ENCODE measurements at regions of chr5 and their contacts with region 1.

Region 1: DNA sequence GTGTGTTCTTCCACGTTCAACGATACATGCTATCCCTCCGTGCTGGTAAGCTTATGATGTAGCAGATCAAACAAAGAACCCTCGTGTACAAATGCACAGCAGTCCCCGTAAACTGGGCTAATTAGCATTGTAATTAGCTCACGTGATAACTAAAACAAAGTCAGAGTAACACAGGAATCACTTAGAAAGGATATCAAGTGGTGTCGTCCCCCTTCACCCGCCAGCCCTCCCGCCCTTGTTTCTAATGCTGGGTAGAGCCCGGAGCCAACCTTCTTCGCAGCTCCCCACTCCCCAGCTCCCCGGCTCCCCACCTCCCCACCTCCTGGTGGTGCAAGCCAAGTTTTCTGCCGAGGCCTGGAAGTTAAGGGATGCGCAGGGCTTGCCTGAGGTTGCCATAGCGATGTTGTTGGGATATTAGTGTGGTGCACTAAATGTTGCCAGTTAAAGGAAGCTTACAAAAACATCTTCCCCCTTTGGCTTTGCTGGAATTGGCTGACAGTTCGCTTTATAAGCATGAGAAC is 357.9 kb upstream of the CCNH start:
- DNase-seq: no peak
- ATAC-seq: no peak
- H3K4me3 ChIP-seq: no peak overlapping the region
- H3K27ac ChIP-seq: no peak overlapping the region
- H3K4me1 ChIP-seq: no peaks in the 10 kb centered on the region
- H3K27me3 ChIP-seq: peaks cover 1% of the 10 kb centered on the region; the same call in 1 of the 2 replicates
- CTCF ChIP-seq: no peak
- POLR2A ChIP-seq: no peak
- RAD21 ChIP-seq: no peak

Region 2: GRCh38 chr5:87421307-87421706 is 349.4 kb before region 1 on chr5:
- CTCF ChIA-PET with region 1: no interaction called
- POLR2A ChIA-PET with region 1: no interaction called
- dilution Hi-C with region 1: no loop called
- in situ Hi-C with region 1: no loop called
- intact Hi-C with region 1: loop called (anchors 10 kb)
- DNase-seq: no peak
- ATAC-seq: no peak
- H3K4me3 ChIP-seq: no peak overlapping the region
- H3K27ac ChIP-seq: no peak overlapping the region
- H3K4me1 ChIP-seq: no peaks in the 10 kb centered on the region
- H3K27me3 ChIP-seq: no peaks in the 10 kb centered on the region
- CTCF ChIP-seq: no peak
- POLR2A ChIP-seq: no peak
- RAD21 ChIP-seq: no peak

Region 3: GRCh38 chr5:87605663-87606062 is 165.0 kb before region 1 on chr5:
- CTCF ChIA-PET with region 1: no interaction called
- POLR2A ChIA-PET with region 1: no interaction called
- dilution Hi-C with region 1: no loop called
- in situ Hi-C with region 1: no loop called
- intact Hi-C with region 1: no loop called
- DNase-seq: no peak
- ATAC-seq: no peak
- H3K4me3 ChIP-seq: no peak overlapping the region
- H3K27ac ChIP-seq: no peak overlapping the region
- H3K4me1 ChIP-seq: no peaks in the 10 kb centered on the region
- H3K27me3 ChIP-seq: no peaks in the 10 kb centered on the region
- CTCF ChIP-seq: no peak
- POLR2A ChIP-seq: no peak
- RAD21 ChIP-seq: no peak

Region 4: DNA sequence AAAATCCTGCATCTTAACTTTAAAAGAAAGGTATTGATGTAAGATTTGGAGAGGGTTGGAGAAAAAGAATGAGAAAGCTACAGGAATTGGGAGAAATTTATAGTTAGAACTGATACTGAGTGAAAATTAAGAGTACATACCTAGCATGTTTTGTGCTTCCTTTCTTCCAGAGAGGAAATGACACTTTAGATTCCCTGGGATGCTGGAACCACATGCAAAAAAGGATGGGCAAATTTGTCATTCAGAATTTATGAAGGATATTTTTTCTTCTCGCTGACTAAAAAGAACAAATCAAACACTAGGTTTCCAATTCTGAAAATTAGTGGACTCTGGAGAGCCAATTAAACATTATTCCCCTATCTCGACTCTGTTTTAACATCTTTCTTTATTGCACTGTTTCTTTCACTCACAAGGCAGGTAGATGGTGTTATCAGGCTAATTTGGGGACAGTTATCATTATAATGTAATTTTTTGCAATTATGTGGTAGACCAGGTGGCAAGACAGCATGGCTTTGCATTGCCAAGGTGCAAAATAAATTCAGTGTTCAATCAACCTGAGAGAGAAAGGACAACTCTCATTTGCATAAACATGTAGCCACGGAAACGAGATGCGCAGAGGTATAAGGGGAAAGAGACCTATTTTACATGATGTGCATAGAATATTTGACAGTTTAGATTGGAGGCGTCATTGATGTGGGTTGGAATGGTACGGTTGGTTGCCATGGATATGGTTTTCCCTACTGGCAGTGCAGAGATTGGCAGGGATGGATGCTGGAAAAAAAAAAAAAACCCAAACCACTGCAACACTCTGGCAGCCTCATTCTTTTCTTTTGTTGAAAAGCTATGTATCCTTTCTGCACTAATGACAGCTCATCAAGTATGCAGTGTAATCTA is 37.5 kb before region 1 on chr5:
- CTCF ChIA-PET with region 1: no interaction called
- POLR2A ChIA-PET with region 1: no interaction called
- dilution Hi-C with region 1: no loop called
- in situ Hi-C with region 1: no loop called
- intact Hi-C with region 1: no loop called
- DNase-seq: no peak
- ATAC-seq: no peak
- H3K4me3 ChIP-seq: no peak overlapping the region
- H3K27ac ChIP-seq: no peak overlapping the region
- H3K4me1 ChIP-seq: no peaks in the 10 kb centered on the region
- H3K27me3 ChIP-seq: no peaks in the 10 kb centered on the region
- CTCF ChIP-seq: no peak
- POLR2A ChIP-seq: no peak
- RAD21 ChIP-seq: no peak

Region 5: GRCh38 chr5:87807783-87808182 is 37.1 kb after region 1 on chr5:
- CTCF ChIA-PET with region 1: no interaction called
- POLR2A ChIA-PET with region 1: no interaction called
- dilution Hi-C with region 1: no loop called
- in situ Hi-C with region 1: no loop called
- intact Hi-C with region 1: no loop called
- DNase-seq: no peak
- ATAC-seq: no peak
- H3K4me3 ChIP-seq: no peak overlapping the region
- H3K27ac ChIP-seq: no peak overlapping the region
- H3K4me1 ChIP-seq: no peaks in the 10 kb centered on the region
- H3K27me3 ChIP-seq: no peaks in the 10 kb centered on the region
- CTCF ChIP-seq: no peak
- POLR2A ChIP-seq: no peak
- RAD21 ChIP-seq: no peak

Region 6: DNA sequence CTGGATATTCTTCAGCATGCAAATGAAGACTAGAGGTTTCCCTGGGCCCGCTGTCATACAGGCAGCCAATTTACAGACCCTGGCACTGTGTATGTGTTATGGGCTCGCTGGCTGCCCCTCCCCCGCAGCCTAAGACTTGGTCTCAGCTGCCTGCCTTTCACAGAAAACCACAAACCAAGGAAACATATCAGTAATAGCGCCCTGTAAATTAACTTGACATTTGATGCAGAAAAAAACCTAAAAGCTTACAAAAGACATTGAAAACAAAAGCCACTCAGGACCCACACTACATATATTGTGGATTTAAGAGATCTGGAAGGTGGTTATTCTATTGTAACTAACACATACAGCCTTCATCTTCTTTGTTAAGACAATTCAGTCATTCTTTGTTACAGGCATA is 785.0 kb after region 1 on chr5:
- CTCF ChIA-PET with region 1: no interaction called
- POLR2A ChIA-PET with region 1: no interaction called
- dilution Hi-C with region 1: no loop called
- in situ Hi-C with region 1: no loop called
- intact Hi-C with region 1: no loop called
- DNase-seq: no peak
- ATAC-seq: no peak
- H3K4me3 ChIP-seq: no peak overlapping the region
- H3K27ac ChIP-seq: no peak overlapping the region
- H3K4me1 ChIP-seq: no peaks in the 10 kb centered on the region
- H3K27me3 ChIP-seq: no peaks in the 10 kb centered on the region
- CTCF ChIP-seq: no peak
- POLR2A ChIP-seq: no peak
- RAD21 ChIP-seq: no peak

Region 7: DNA sequence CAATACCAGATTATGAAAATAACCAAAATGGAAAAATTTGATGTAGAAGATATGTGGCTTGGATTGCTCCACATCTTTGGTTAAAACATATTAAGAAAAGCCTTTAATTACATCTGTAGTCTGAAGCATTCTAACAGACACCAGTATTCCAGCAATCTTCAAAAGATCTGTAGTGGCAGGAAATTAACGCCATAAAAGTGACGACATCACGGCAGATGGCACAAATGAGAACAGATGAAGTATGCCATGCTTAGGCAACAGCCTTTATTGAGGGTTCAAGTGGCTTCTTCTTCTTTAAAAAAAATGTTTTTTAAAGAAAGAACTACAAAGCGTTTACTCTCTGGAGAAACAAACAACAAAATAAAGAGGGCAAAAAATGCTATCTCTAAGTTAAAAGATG is 948.1 kb after region 1 on chr5:
- CTCF ChIA-PET with region 1: no interaction called
- POLR2A ChIA-PET with region 1: no interaction called
- dilution Hi-C with region 1: no loop called
- in situ Hi-C with region 1: loop called (anchors 10 kb)
- intact Hi-C with region 1: no loop called
- DNase-seq: no peak
- ATAC-seq: no peak
- H3K4me3 ChIP-seq: no peak overlapping the region
- H3K27ac ChIP-seq: no peak overlapping the region
- H3K4me1 ChIP-seq: no peaks in the 10 kb centered on the region
- H3K27me3 ChIP-seq: no peaks in the 10 kb centered on the region
- CTCF ChIP-seq: no peak
- POLR2A ChIP-seq: no peak
- RAD21 ChIP-seq: no peak

Measured in IMR-90 (cell line).